ENCODE measurements at regions of chr1 and their contacts with region 1.

Region 1: DNA sequence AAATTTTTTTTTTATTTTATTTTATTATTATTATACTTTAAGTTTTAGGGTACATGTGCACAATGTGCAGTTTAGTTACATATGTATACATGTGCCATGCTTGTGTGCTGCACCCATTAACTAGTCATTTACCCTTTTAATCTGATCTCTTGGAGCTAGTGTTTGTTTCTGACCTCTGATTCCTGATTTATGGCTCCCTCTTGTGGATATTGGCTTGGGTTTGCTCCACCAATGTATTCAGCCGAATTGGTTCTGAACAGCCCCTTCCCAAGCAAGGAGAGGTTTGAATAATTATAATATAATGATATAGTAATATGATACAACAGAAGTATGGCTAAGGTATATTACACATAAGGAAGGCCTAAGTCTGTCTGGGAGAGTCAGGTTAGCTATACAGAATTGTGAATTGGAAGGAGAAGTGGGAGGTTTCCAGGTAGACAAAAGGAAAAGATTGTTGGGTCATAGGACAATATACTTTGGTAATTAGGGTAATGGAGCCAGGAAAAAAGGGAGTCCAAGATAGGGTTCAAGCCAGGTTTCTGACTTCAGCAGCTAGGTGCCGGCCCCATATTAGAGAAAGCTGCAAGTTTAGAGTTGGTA is 53.1 kb upstream of the HMCN1 start:
- DNase-seq: no peak
- ATAC-seq: peak; percentile 69
- H3K4me3 Mint-ChIP-seq: peak overlapping the region; percentile 7
- H3K27ac Mint-ChIP-seq: no peak overlapping the region
- H3K4me1 Mint-ChIP-seq: peaks cover 23% of the 10 kb centered on the region
- H3K27me3 Mint-ChIP-seq: peaks cover 3% of the 10 kb centered on the region

Region 2: DNA sequence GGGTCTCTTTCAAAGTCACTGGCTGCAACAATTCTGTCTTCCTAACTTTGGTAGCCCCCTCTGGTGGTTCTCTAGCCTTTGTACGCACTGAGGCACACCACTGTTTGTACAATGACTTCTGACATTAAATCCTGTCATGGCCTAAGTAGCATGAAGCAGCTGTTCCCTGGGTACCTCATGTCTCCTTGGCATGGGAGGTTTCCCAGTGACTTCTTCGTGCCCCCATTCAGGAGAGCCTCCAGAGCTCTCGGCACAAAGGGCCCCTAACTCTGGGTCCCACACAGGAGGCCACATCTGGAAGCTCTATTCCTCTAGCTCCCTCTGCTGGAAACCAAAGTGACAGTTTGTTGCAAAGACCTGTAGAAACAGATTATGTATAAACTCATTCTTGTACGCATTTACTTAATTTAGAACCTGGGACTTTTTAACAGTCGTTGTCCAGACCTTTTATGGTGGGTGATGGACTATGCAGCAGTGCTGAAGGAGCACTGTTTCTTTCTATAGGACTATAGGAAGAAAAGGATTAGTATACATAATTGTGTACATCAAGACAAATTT is 510.8 kb before region 1 on chr1:
- CTCF ChIA-PET with region 1: interaction called, 16 read pairs
- DNase-seq: peak; percentile 68
- ATAC-seq: peak; percentile 92
- H3K4me3 Mint-ChIP-seq: no peak overlapping the region
- H3K27ac Mint-ChIP-seq: peak overlapping the region; percentile 28
- H3K4me1 Mint-ChIP-seq: peaks cover 19% of the 10 kb centered on the region
- H3K27me3 Mint-ChIP-seq: no peaks in the 10 kb centered on the region

Region 3: GRCh38 chr1:185317034-185317885 is 363.9 kb before region 1 on chr1 and contains the start of gene IVNS1ABP:
- CTCF ChIA-PET with region 1: interaction called, 24 read pairs
- DNase-seq: peak; percentile 97
- ATAC-seq: peak; percentile 75
- H3K4me3 Mint-ChIP-seq: peak within 1 kb of the TSS; percentile 99
- H3K27ac Mint-ChIP-seq: peak within 1 kb of the TSS; percentile 97
- H3K4me1 Mint-ChIP-seq: peaks cover 44% of the 10 kb centered on the region
- H3K27me3 Mint-ChIP-seq: no peaks in the 10 kb centered on the region
- total RNA-seq, gene IVNS1ABP: 251 to 509 TPM

Region 4: DNA sequence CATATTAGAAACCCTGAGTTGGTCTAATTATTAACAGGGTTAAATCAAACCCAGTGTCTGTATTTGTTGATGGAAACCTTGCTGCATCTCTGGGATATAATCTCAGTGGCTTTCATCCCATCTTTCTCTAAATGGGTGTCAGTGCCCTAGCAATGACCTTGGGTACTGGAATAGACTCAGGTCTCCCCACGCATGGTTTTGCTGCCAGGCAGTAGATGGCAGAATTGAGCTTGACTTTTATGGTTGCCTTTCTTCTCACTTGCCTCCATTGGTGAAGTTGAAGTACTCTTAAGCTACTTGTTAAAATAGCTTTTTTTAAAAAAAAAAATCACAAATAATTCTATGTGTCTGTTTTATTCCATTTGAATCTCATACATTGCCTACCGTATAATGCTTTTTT is 28.8 kb before region 1 on chr1:
- CTCF ChIA-PET with region 1: interaction called, 16 read pairs
- DNase-seq: no peak
- ATAC-seq: no peak
- H3K4me3 Mint-ChIP-seq: no peak overlapping the region
- H3K27ac Mint-ChIP-seq: no peak overlapping the region
- H3K4me1 Mint-ChIP-seq: peaks cover 9% of the 10 kb centered on the region
- H3K27me3 Mint-ChIP-seq: no peaks in the 10 kb centered on the region

Region 5: DNA sequence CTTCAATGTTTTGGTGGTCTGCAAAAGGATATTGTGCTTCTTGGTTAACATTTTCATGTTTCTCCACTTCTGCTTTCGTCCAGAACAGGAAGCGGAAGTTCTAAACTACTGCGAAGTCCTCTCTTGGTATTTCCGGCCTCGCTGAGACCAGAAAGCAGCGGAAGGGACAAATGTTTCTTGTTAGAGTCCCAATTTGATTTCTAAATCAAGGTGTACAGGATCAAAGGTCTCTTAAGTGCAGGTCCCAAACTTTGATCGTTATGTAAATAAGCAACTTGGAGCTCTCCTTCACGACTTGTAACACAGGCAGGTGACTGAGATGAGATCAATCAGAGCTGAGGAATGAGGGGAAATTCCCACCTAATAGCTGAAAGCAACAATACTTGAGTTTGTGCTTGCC is 12.9 kb after region 1 on chr1:
- CTCF ChIA-PET with region 1: interaction called, 13 read pairs
- DNase-seq: peak; percentile 58
- ATAC-seq: peak; percentile 64
- H3K4me3 Mint-ChIP-seq: peak overlapping the region; percentile 53
- H3K27ac Mint-ChIP-seq: peak overlapping the region; percentile 75
- H3K4me1 Mint-ChIP-seq: peaks cover 17% of the 10 kb centered on the region
- H3K27me3 Mint-ChIP-seq: peaks cover 8% of the 10 kb centered on the region